ENCODE measurements at regions of chr7 and their contacts with region 1.

Region 1: GRCh38 chr7:92682903-92683539 is 92.8 kb upstream of the FAM133B start:
- DNase-seq: peak; percentile 44
- H3K4me3 Mint-ChIP-seq: peak overlapping the region; percentile 7
- H3K27ac Mint-ChIP-seq: peak overlapping the region; percentile 90
- H3K4me1 Mint-ChIP-seq: peaks cover 79% of the 10 kb centered on the region
- H3K27me3 Mint-ChIP-seq: no peaks in the 10 kb centered on the region

Region 2: GRCh38 chr7:92447345-92448204 is 235.4 kb before region 1 on chr7 and contains the start of gene GATAD1:
- CTCF ChIA-PET with region 1: no interaction called
- intact Hi-C with region 1: no loop called
- DNase-seq: peak; percentile 89
- H3K4me3 Mint-ChIP-seq: peak within 1 kb of the TSS; percentile 82
- H3K27ac Mint-ChIP-seq: peak within 1 kb of the TSS; percentile 84
- H3K4me1 Mint-ChIP-seq: peaks cover 12% of the 10 kb centered on the region
- H3K27me3 Mint-ChIP-seq: no peaks in the 10 kb centered on the region
- total RNA-seq, gene GATAD1: 27.5 to 29.6 TPM

Region 3: GRCh38 chr7:92633211-92633906 is 49.7 kb before region 1 on chr7:
- CTCF ChIA-PET with region 1: no interaction called
- intact Hi-C with region 1: loop called (anchors 1 kb)
- DNase-seq: peak; percentile 49
- H3K4me3 Mint-ChIP-seq: no peak overlapping the region
- H3K27ac Mint-ChIP-seq: peak overlapping the region; percentile 92
- H3K4me1 Mint-ChIP-seq: peaks cover 84% of the 10 kb centered on the region
- H3K27me3 Mint-ChIP-seq: no peaks in the 10 kb centered on the region

Region 4: GRCh38 chr7:92669616-92670165 is 13.3 kb before region 1 on chr7:
- CTCF ChIA-PET with region 1: no interaction called
- intact Hi-C with region 1: loop called (anchors 1 kb)
- DNase-seq: peak; percentile 29
- H3K4me3 Mint-ChIP-seq: no peak overlapping the region
- H3K27ac Mint-ChIP-seq: no peak overlapping the region
- H3K4me1 Mint-ChIP-seq: peaks cover 59% of the 10 kb centered on the region
- H3K27me3 Mint-ChIP-seq: no peaks in the 10 kb centered on the region

Region 5: DNA sequence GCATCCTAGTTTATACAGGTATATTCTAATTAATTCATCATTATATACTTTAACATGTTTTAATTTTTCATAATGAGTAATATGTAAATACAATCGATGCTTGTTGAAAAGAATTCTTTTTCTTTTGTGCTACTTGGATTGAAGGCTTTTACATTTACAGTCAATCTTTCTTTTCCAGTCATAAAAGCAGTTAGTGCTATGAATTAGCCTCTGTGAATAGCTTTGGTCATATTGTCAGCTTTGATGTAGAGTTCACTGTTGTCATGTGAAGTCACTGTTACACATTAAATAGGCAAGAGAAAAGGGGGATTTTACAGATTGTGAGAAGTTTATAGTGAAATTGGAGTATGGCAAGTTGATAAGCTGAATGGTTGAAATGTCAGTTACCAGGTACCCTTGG is 10.5 kb after region 1 on chr7:
- CTCF ChIA-PET with region 1: no interaction called
- intact Hi-C with region 1: no loop called
- DNase-seq: no peak
- H3K4me3 Mint-ChIP-seq: no peak overlapping the region
- H3K27ac Mint-ChIP-seq: no peak overlapping the region
- H3K4me1 Mint-ChIP-seq: peaks cover 66% of the 10 kb centered on the region
- H3K27me3 Mint-ChIP-seq: no peaks in the 10 kb centered on the region

Region 6: GRCh38 chr7:92717993-92718716 is 35.1 kb after region 1 on chr7:
- CTCF ChIA-PET with region 1: no interaction called
- intact Hi-C with region 1: loop called (anchors 1 kb)
- DNase-seq: peak; percentile 82
- H3K4me3 Mint-ChIP-seq: peak overlapping the region; percentile 79
- H3K27ac Mint-ChIP-seq: peak overlapping the region; percentile 93
- H3K4me1 Mint-ChIP-seq: peaks cover 74% of the 10 kb centered on the region
- H3K27me3 Mint-ChIP-seq: no peaks in the 10 kb centered on the region

Region 7: GRCh38 chr7:92797693-92798092 is 114.7 kb after region 1 on chr7:
- CTCF ChIA-PET with region 1: no interaction called
- intact Hi-C with region 1: no loop called
- DNase-seq: peak; percentile 51
- H3K4me3 Mint-ChIP-seq: no peak overlapping the region
- H3K27ac Mint-ChIP-seq: no peak overlapping the region
- H3K4me1 Mint-ChIP-seq: peaks cover 29% of the 10 kb centered on the region
- H3K27me3 Mint-ChIP-seq: no peaks in the 10 kb centered on the region

Region 8: DNA sequence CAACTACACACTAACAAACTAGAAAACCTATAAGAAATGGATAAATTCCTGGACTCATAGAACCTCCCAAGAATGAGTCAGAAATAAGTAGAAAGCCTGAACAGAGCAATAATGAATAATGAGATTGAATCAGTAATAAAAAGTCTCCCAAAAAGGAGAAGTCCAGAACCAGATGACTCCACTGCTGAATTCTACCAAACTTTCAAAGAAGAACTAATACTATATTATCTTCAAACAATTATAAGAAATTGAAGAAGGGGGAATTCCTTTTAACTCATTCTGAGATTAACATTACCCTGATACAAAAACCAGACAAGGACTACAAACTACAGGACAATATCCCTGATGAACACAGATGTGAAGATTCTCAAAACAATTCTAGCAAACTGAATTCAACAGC is 201.2 kb after region 1 on chr7:
- CTCF ChIA-PET with region 1: no interaction called
- intact Hi-C with region 1: no loop called
- DNase-seq: no peak
- H3K4me3 Mint-ChIP-seq: no peak overlapping the region
- H3K27ac Mint-ChIP-seq: no peak overlapping the region
- H3K4me1 Mint-ChIP-seq: peaks cover 15% of the 10 kb centered on the region
- H3K27me3 Mint-ChIP-seq: peaks cover 7% of the 10 kb centered on the region

Region 9: GRCh38 chr7:93036807-93037206 is 353.8 kb after region 1 on chr7:
- CTCF ChIA-PET with region 1: no interaction called
- intact Hi-C with region 1: loop called (anchors 1 kb)
- DNase-seq: peak; percentile 74
- H3K4me3 Mint-ChIP-seq: no peak overlapping the region
- H3K27ac Mint-ChIP-seq: peak overlapping the region; percentile 59
- H3K4me1 Mint-ChIP-seq: peaks cover 22% of the 10 kb centered on the region
- H3K27me3 Mint-ChIP-seq: no peaks in the 10 kb centered on the region